Gastrocnemius medialis (tissue), 4 donors: ENCODE measurements at regions of chrX and their contacts with region 1.

Region 1: GRCh38 chrX:109709129-109709631 is 23.9 kb downstream of the ACSL4 start:
- DNase-seq: no peak
- ATAC-seq: peak in 1 of 2 donors; percentile 23
- H3K4me3 ChIP-seq: no peak overlapping the region
- H3K27ac ChIP-seq: peak overlapping the region; percentile 8 to 48 (median 28)
- H3K4me1 ChIP-seq: peaks cover 9 to 10% of the 10 kb centered on the region in 2 donors
- H3K27me3 ChIP-seq: peaks cover 0 to 4% (median 0%) of the 10 kb centered on the region in 3 donors
- CTCF ChIP-seq: no peak
- POLR2A ChIP-seq: no peak

Region 2: GRCh38 chrX:109590176-109590575 is 119.0 kb before region 1 on chrX:
- in situ Hi-C with region 1: no loop called
- intact Hi-C with region 1: no loop called
- DNase-seq: no peak
- ATAC-seq: no peak
- H3K4me3 ChIP-seq: no peak overlapping the region
- H3K27ac ChIP-seq: no peak overlapping the region
- H3K4me1 ChIP-seq: no peaks in the 10 kb centered on the region
- H3K27me3 ChIP-seq: no peaks in the 10 kb centered on the region
- CTCF ChIP-seq: no peak
- POLR2A ChIP-seq: no peak

Region 3: DNA sequence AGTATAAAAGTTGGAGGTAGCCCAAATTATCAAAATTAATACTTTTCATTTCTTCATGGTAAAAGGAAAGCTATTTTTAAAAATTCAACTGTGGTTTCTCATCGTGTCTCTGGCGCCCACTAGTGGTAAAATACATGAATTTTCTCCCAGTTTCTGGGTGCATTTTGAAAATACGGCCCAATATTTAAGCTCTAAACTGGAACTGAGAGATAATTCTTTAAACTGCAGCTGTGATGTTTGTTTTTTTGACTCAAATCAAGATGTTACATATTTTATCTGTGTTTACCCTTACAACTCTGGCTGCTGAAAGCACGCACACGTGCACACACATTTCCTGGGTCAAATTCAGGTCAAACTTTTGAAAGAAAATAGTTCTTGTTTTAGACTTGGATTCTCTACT is 147.8 kb after region 1 on chrX:
- in situ Hi-C with region 1: loop called (anchors 5 to 10 kb)
- intact Hi-C with region 1: loop called (anchors 2 kb)
- DNase-seq: no peak
- ATAC-seq: no peak
- H3K4me3 ChIP-seq: no peak overlapping the region
- H3K27ac ChIP-seq: peak overlapping the region in 2 of 4 donors; percentile 23 to 41
- H3K4me1 ChIP-seq: no peaks in the 10 kb centered on the region
- H3K27me3 ChIP-seq: no peaks in the 10 kb centered on the region
- CTCF ChIP-seq: peak; percentile 60 to 83 (median 65)
- POLR2A ChIP-seq: no peak

Region 4: DNA sequence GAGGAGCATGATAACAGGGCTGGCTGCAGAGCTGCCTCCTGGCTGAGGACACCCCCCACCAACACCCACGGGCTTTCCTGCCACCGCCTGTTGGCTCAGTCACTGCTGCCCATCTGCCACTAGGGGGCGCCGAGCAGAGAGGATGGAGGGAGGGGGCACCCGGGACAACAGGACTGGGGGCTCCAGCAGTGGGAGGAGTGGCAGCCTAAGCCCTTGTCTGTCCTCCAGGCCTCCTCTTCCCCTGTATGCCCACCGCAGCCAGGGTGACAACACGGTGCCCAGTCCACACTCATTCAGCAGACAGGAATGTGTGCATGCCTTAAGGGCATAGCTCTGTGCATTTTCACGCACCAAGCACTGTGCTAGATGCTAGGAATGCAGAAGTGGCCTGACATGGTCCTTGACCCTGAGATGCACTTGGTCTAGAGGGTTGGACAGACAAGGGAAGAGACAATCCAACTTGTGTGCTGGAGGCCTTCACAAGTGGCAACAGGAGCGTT is 458.8 kb after region 1 on chrX:
- in situ Hi-C with region 1: loop called in 1 of 4 experiments (anchors 25 kb)
- intact Hi-C with region 1: no loop called
- DNase-seq: no peak
- ATAC-seq: no peak
- H3K4me3 ChIP-seq: no peak overlapping the region
- H3K27ac ChIP-seq: no peak overlapping the region
- H3K4me1 ChIP-seq: peaks cover 0 to 8% of the 10 kb centered on the region in 2 donors
- H3K27me3 ChIP-seq: no peaks in the 10 kb centered on the region
- CTCF ChIP-seq: peak in 4 of 5 experiments; percentile 13 to 57 (median 40)
- POLR2A ChIP-seq: no peak